ENCODE measurements at regions of chr15 and their contacts with region 1.

Region 1: GRCh38 chr15:75578948-75579920 is at the start of gene PTPN9:
- DNase-seq: peak; percentile 86 to 95 (median 90)
- ATAC-seq: peak; percentile 90
- H3K4me3 ChIP-seq: peak within 1 kb of the TSS; percentile 96
- H3K27ac ChIP-seq: peak within 1 kb of the TSS; percentile 95
- H3K4me1 ChIP-seq: peaks cover 10 to 23% of the 10 kb centered on the region in 2 experiments; a peak in 4 of 5 replicates
- H3K27me3 ChIP-seq: no peaks in the 10 kb centered on the region
- CTCF ChIP-seq: peak in 2 of 3 experiments; percentile 49 to 54; a peak in 3 of 6 replicates
- EP300 ChIP-seq: no peak
- POLR2A ChIP-seq: peak; percentile 69
- RAD21 ChIP-seq: peak in 1 of 2 experiments; percentile 23; a peak in 1 of 4 replicates
- polyA plus RNA-seq, gene PTPN9: 5.0 to 6.3 TPM

Region 2: DNA sequence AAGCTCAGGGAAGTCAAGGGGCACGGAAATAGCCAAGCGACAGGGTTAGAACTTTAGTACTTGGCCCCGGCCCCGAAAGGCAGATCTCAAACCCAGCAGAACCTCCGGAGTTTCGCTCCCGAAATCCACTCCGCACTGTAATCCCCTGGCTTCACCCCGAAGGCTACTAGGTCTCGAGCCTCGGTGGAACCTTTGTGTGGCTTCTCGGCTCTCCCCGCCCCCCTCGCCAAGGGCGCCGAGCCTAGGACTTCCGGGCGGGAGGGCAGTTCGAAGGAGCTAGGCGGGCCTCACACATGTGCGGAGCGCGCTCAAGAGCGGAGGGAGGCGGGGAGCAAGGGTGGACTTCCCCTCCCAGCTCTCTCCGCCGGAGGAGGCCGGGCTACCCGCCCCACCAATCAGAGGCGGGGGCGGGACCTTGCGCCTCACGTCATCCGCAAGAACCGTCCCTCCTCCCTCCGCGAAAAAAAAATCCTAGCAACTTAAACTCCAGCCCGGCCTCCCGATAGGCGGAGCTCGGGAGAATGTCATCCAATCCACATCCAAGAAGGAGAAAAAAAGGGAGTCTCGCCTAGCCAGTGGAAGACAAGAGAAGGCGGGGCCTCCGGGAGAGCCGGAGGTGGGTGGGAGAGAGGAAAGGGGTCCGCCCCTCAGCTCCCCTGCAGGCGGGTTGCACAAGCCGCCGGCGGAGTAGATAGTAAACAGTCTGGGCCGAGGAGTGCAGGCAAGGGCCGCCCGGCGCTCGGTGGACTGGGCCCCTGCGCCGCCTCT is 125.3 kb before region 1 on chr15:
- CTCF ChIA-PET with region 1: no interaction called
- POLR2A ChIA-PET with region 1: interaction called, 3 read pairs
- in situ Hi-C with region 1: no loop called
- intact Hi-C with region 1: loop called (anchors 5 kb)
- DNase-seq: peak; percentile 88 to 99 (median 92)
- ATAC-seq: peak; percentile 64
- H3K4me3 ChIP-seq: peak overlapping the region; percentile 86
- H3K27ac ChIP-seq: peak overlapping the region; percentile 97
- H3K4me1 ChIP-seq: peaks cover 13 to 33% of the 10 kb centered on the region in 2 experiments; a peak in 3 of 5 replicates
- H3K27me3 ChIP-seq: no peaks in the 10 kb centered on the region
- CTCF ChIP-seq: peak in 1 of 3 experiments; percentile 11; a peak in 1 of 6 replicates
- EP300 ChIP-seq: no peak
- POLR2A ChIP-seq: peak; percentile 87
- RAD21 ChIP-seq: no peak

Region 3: DNA sequence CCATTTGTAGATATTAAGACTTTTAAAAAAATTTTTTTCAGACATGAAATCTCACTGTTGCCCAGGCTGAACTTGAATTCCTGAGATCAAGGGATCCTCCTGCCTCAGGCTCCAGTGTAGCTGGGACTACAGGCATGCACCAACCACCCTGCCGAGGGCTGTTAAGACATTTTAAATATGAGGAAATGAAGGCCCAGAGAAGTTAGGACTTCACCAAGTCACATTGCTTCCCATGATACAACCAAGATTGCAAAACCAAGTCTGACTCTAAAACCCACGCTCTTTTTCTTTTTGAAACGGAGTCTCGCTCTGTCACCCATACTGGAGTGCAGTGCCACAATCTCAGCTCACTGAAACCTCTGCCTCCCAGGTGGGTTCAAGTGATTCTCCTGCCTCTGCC is 28.2 kb before region 1 on chr15:
- CTCF ChIA-PET with region 1: no interaction called
- POLR2A ChIA-PET with region 1: no interaction called
- in situ Hi-C with region 1: no loop called
- intact Hi-C with region 1: no loop called
- DNase-seq: no peak
- ATAC-seq: no peak
- H3K4me3 ChIP-seq: no peak overlapping the region
- H3K27ac ChIP-seq: no peak overlapping the region
- H3K4me1 ChIP-seq: peaks cover 0 to 9% of the 10 kb centered on the region in 2 experiments; a peak in 3 of 5 replicates
- H3K27me3 ChIP-seq: no peaks in the 10 kb centered on the region
- CTCF ChIP-seq: no peak
- EP300 ChIP-seq: no peak
- POLR2A ChIP-seq: no peak
- RAD21 ChIP-seq: no peak

Region 4: DNA sequence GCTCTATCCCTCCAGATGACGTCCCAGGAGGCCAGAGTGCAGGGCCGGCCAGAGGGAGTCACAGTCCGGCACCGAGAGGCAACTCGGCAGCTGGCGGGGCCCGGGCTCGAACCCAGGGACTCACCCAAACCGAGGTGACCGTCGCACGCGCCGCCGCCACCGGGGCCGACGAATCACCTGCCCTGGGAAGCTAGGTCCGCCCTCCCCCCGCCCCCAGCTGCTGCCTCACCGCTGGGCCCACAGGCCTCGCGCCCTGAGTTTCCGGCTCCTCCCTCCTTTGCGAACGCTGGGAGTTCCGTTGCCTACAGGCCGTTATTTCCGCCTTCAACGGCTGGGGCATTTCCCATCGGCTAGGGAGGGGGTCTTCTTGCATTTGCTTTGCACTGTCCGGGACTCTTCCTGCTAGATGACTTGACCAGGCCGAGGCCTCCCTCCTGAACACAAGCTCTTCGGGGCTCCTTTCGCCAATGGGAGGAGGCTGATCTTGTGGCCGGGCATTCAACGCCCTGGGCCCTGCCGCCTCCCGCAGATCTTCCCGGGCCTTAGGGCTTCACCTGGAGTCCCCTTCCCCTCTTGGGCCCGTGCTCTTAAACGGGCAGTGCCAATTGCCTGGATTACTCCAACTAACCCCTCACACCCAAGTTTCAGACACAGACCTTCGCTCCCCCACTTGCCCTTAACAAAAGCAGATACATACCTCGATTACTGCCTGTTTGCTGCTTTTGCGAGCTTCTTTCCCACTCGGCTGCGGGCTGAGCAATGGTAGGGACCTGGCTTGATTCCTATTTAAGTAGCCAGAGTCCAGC is 46.5 kb after region 1 on chr15 and contains the start of gene SNUPN:
- CTCF ChIA-PET with region 1: no interaction called
- POLR2A ChIA-PET with region 1: interaction called, 6 read pairs
- in situ Hi-C with region 1: no loop called
- intact Hi-C with region 1: loop called (anchors 5 kb)
- DNase-seq: peak; percentile 95 to 99 (median 96)
- ATAC-seq: peak; percentile 91
- H3K4me3 ChIP-seq: peak within 1 kb of the TSS; percentile 99
- H3K27ac ChIP-seq: peak within 1 kb of the TSS; percentile 91
- H3K4me1 ChIP-seq: peaks cover 20 to 23% of the 10 kb centered on the region in 2 experiments
- H3K27me3 ChIP-seq: no peaks in the 10 kb centered on the region
- CTCF ChIP-seq: no peak
- EP300 ChIP-seq: peak; percentile 77; the same call in 1 of the 2 replicates
- POLR2A ChIP-seq: peak; percentile 92
- RAD21 ChIP-seq: no peak
- polyA plus RNA-seq, gene SNUPN: 69.3 to 78.3 TPM